Left colon (tissue), 2 donors: ENCODE measurements at regions of chr4 and their contacts with region 1.

Region 1: GRCh38 chr4:9898596-9899305 is 117.3 kb downstream of the DRD5 start:
- DNase-seq: peak; percentile 31 to 35
- ATAC-seq: peak; percentile 93

Region 2: GRCh38 chr4:10018818-10019461 is 120.2 kb after region 1 on chr4:
- intact Hi-C with region 1: loop called in 1 of 2 experiments (anchors 5 kb)
- DNase-seq: peak; percentile 96 to 98
- ATAC-seq: peak; percentile 95